ENCODE measurements at regions of chr1 and their contacts with region 1.

Region 1: DNA sequence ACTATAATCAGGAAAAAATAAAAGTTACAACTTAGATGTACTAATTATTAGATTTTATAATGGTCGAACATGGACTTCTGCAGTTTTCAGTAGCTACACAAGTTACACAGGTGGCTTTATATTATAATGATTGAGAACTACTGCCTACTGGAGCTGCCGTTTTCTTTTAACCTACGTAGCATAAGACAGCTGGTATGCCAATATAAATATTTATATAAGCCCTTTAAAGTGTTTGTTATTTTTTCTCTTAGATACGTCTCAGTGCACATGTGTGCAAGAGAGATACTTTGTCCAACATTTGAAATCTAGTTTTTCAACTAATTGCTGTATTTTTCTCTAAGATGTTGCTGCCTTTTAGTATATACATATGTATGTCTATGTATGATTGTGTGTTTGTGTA is 42.4 kb downstream of the PDC start:
- DNase-seq: no peak
- H3K4me3 ChIP-seq: no peak overlapping the region
- H3K27ac ChIP-seq: no peak overlapping the region
- H3K4me1 ChIP-seq: no peaks in the 10 kb centered on the region
- H3K27me3 ChIP-seq: no peaks in the 10 kb centered on the region
- CTCF ChIP-seq: no peak

Region 2: DNA sequence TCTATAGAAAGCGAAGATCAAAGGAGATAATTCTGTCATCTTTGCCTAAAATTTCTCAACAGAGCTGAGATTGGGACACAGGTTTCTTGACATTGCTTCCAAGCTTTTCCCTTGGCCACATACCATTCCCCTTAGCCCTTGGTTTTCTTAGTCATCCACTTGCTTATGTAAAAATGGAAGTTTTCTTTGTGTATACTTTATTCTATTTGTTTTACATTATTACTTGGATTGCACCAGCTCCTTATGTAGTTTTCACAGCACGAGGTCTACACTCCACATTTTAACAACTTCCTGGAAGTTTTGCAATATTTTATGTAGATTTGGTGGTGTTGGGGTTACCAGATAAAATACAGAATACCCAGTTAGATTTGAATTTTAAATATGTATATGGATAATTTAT is 540.0 kb after region 1 on chr1:
- CTCF ChIA-PET with region 1: no interaction called
- POLR2A ChIA-PET with region 1: interaction called, 15 read pairs
- intact Hi-C with region 1: no loop called
- DNase-seq: no peak
- H3K4me3 ChIP-seq: no peak overlapping the region
- H3K27ac ChIP-seq: no peak overlapping the region
- H3K4me1 ChIP-seq: no peaks in the 10 kb centered on the region
- H3K27me3 ChIP-seq: no peaks in the 10 kb centered on the region
- CTCF ChIP-seq: no peak

Measured in PC-9 (cell line).